Colonic mucosa (tissue), 4 donors: ENCODE measurements at regions of chrX and their contacts with region 1.

Region 1: GRCh38 chrX:40539214-40540142 is 41.3 kb upstream of the ATP6AP2 start:
- DNase-seq: peak; percentile 29
- H3K4me3 ChIP-seq: no peak overlapping the region
- H3K27ac ChIP-seq: no peak overlapping the region
- H3K4me1 ChIP-seq: no peaks in the 10 kb centered on the region
- H3K27me3 ChIP-seq: no peaks in the 10 kb centered on the region
- CTCF ChIP-seq: peak; percentile 18

Region 2: GRCh38 chrX:40792433-40792832 is 253.0 kb after region 1 on chrX:
- intact Hi-C with region 1: loop called (anchors 10 kb)
- DNase-seq: no peak
- H3K4me3 ChIP-seq: no peak overlapping the region
- H3K27ac ChIP-seq: no peak overlapping the region
- H3K4me1 ChIP-seq: no peaks in the 10 kb centered on the region
- H3K27me3 ChIP-seq: no peaks in the 10 kb centered on the region
- CTCF ChIP-seq: no peak